ENCODE measurements at regions of chr4 and their contacts with region 1.

Region 1: DNA sequence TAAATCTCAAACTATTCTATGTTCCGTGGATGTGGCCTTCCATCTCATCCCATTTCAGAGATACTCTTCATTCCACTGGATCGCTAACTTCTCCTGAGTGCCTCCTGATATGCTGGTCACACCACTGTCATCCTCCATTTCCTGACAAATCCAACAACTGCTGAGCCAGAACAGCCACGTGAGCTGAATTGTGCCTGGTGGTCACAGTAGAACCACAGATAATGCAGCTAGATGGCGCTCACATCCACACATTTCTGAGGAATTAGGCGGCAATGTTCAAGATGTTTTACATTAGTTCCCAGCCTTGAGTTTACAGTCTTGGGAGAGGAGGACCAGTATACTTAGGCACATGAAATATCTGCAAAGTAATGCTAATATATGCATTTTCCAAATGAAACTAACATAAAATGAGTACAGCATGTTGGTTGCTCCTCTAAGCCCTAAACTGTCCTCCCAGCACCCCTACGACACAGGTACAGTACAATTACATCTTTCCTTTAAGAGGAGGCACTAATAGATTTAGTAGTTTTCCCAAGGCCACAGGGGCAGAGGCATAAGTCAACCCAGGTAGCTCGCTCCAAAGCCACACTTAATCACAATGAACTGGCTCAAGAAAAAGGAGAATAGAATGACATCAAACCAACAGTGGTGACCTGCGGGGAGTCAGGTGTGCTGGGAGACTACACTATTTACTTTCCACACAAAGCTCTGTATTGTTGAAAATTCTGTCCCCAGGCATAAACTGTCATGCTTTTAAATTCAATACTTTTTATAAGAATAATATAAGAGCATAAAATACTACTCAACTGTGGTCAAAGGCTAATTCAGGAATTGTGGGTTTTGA is 134.2 kb downstream of the CHIC2 start:
- DNase-seq: peak; percentile 82
- H3K27ac ChIP-seq: no peak overlapping the region
- CTCF ChIP-seq: peak; percentile 76

Region 2: DNA sequence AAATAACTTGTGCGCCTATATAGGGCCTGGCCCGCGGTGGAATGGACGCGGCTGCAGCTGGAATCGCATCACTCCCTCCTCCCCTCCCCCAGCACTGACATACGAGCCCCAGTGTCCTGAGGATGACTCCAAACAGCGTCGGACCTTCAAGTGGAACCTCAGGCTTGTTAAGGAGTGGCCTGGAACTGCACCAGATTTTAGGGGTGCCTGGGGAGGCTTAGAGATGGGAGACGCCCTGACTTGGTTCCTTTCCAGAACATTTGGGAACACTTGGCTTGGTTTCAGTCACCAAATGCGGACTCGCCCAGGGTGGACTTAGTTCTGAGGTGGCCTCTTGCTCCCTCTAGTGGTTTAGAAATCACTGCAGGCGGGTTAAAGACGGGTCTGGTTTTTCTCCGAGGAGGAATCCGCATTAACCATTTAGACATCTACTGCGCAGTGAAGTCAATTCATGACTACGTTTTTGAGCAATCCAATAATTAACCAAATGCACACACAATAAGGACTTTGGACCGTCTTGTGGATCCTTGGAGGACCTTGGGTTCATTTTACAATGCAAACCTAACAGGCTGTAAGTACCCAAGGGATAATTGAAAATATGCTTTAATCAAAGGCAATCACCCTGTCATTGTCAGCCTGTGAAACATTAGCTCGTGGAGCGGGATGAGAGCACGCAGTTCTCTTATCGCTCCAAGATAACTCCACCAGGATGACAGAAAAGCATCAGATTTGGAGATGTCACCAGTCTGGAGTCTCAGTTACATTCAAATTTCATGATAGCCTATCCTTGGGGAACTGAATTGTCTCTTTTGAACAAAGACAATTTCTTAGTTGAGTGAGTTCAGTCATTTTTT is 287.7 kb after region 1 on chr4:
- CTCF ChIA-PET with region 1: interaction called, 19 read pairs
- POLR2A ChIA-PET with region 1: no interaction called
- DNase-seq: peak; percentile 77
- H3K27ac ChIP-seq: peak overlapping the region; percentile 37
- CTCF ChIP-seq: peak; percentile 90